Psoas muscle (tissue), 8 donors: ENCODE measurements at regions of chr9 and their contacts with region 1.

Region 1: DNA sequence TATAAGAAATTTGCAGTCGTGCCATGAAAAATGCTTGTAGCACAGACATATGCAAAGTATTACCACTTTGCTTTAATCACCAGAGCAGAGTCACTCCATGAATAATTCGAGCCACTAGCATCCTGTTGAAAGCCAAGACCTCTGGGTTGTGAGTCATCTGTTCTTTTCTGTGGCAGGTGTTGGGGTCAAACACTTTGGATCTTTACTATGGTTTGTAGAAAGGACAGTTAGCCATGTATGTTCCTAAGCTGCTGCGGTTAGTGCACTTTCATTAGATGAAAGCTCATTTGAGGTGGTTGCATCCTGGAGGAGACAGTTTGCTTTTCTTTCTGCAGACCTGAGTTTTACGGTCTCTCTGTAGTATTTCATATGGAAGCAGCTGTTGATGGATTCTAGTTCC is 223.7 kb downstream of the DMRT2 start:
- DNase-seq: no peak
- ATAC-seq: peak in 3 of 4 donors; percentile 52 to 73 (median 71)
- H3K4me3 ChIP-seq: no peak overlapping the region
- H3K27ac ChIP-seq: no peak overlapping the region
- H3K4me1 ChIP-seq: no peaks in the 10 kb centered on the region
- H3K27me3 ChIP-seq: no peaks in the 10 kb centered on the region
- CTCF ChIP-seq: no peak

Region 2: GRCh38 chr9:1358352-1358751 is 84.5 kb after region 1 on chr9:
- intact Hi-C with region 1: no loop called
- DNase-seq: no peak
- ATAC-seq: no peak
- H3K4me3 ChIP-seq: no peak overlapping the region
- H3K27ac ChIP-seq: no peak overlapping the region
- H3K4me1 ChIP-seq: no peaks in the 10 kb centered on the region
- H3K27me3 ChIP-seq: no peaks in the 10 kb centered on the region
- CTCF ChIP-seq: no peak

Region 3: DNA sequence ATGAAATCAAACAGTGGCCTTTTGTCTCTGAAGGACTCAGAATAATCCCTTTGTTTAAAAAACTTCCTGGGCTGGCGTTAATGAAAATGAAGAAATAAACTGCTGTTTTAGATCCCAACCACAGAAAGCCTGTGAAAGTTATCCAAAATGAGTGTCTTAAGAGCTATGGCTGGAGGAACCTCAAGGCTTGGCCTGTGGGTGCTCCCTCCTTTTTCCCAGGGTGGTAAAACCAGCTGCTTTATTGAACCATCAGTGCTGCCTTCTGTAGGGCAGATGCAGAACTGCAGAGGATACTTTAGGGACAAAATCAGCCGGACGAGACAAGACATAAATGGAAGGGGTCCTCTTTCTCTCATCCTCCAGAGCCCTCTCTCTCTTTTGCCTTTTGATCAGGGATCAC is 842.2 kb after region 1 on chr9:
- intact Hi-C with region 1: loop called in 1 of 2 experiments (anchors 10 kb)
- DNase-seq: no peak
- ATAC-seq: no peak
- H3K4me3 ChIP-seq: no peak overlapping the region
- H3K27ac ChIP-seq: no peak overlapping the region
- H3K4me1 ChIP-seq: no peaks in the 10 kb centered on the region
- H3K27me3 ChIP-seq: no peaks in the 10 kb centered on the region
- CTCF ChIP-seq: peak; percentile 17